CD14-positive monocyte (primary cell): ENCODE measurements at regions of chrX and their contacts with region 1.

Region 1: GRCh38 chrX:96846841-96847240 is 36.9 kb upstream of the RPA4 start:
- DNase-seq: no peak
- H3K4me3 ChIP-seq: no peak overlapping the region
- H3K4me3 Mint-ChIP-seq: no peak overlapping the region
- H3K27ac ChIP-seq: no peak overlapping the region
- H3K27ac Mint-ChIP-seq: no peak overlapping the region
- H3K4me1 ChIP-seq: no peaks in the 10 kb centered on the region
- H3K4me1 Mint-ChIP-seq: no peaks in the 10 kb centered on the region
- H3K27me3 ChIP-seq: no peaks in the 10 kb centered on the region
- H3K27me3 Mint-ChIP-seq: peaks cover 0 to 10% (median 0%) of the 10 kb centered on the region in 3 donors
- CTCF ChIP-seq: no peak

Region 2: GRCh38 chrX:96906741-96907140 is 59.9 kb after region 1 on chrX:
- intact Hi-C with region 1: loop called in 1 of 2 experiments (anchors 5 kb)
- DNase-seq: no peak
- H3K4me3 ChIP-seq: no peak overlapping the region
- H3K4me3 Mint-ChIP-seq: no peak overlapping the region
- H3K27ac ChIP-seq: no peak overlapping the region
- H3K27ac Mint-ChIP-seq: no peak overlapping the region
- H3K4me1 ChIP-seq: no peaks in the 10 kb centered on the region
- H3K4me1 Mint-ChIP-seq: no peaks in the 10 kb centered on the region
- H3K27me3 ChIP-seq: no peaks in the 10 kb centered on the region
- H3K27me3 Mint-ChIP-seq: peaks cover 0 to 5% (median 0%) of the 10 kb centered on the region in 3 donors
- CTCF ChIP-seq: no peak